HepG2 (cell line): ENCODE measurements at regions of chr5 and their contacts with region 1.

Region 1: GRCh38 chr5:132490486-132491367 is at the start of gene IRF1:
- DNase-seq: peak; percentile 91
- ATAC-seq: peak; percentile 91
- H3K4me3 ChIP-seq: peak within 1 kb of the TSS; percentile 65 to 85 (median 65)
- H3K27ac ChIP-seq: peak within 1 kb of the TSS; percentile 78
- H3K4me1 ChIP-seq: peaks cover 45% of the 10 kb centered on the region
- H3K27me3 ChIP-seq: no peaks in the 10 kb centered on the region
- CTCF ChIP-seq: peak; percentile 46; the same call in 1 of the 2 replicates
- EP300 ChIP-seq: peak in 1 of 2 experiments; percentile 27; a peak in 1 of 4 replicates
- POLR2A ChIP-seq: peak in 1 of 2 experiments; percentile 91; a peak in 2 of 4 replicates
- RAD21 ChIP-seq: no peak; the same call in none of the 2 replicates
- total RNA-seq, gene IRF1: 5.8 and 8.8 TPM in 2 replicates

Region 2: GRCh38 chr5:132293066-132293991 is 197.4 kb before region 1 on chr5:
- CTCF ChIA-PET with region 1: no interaction called
- POLR2A ChIA-PET with region 1: interaction called, 16 read pairs
- in situ Hi-C with region 1: loop called (anchors 10 kb)
- intact Hi-C with region 1: no loop called
- DNase-seq: peak; percentile 82
- ATAC-seq: peak; percentile 84
- H3K4me3 ChIP-seq: peak overlapping the region; percentile 51 to 79 (median 55)
- H3K27ac ChIP-seq: peak overlapping the region; percentile 92
- H3K4me1 ChIP-seq: peaks cover 27% of the 10 kb centered on the region
- H3K27me3 ChIP-seq: no peaks in the 10 kb centered on the region; a peak in 2 of 5 replicates
- CTCF ChIP-seq: peak; percentile 43
- EP300 ChIP-seq: no peak
- POLR2A ChIP-seq: peak; percentile 57 to 79
- RAD21 ChIP-seq: no peak; the same call in 1 of the 2 replicates

Region 3: GRCh38 chr5:132386644-132387286 is 104.0 kb before region 1 on chr5:
- CTCF ChIA-PET with region 1: no interaction called
- POLR2A ChIA-PET with region 1: interaction called, 10 read pairs
- in situ Hi-C with region 1: loop called (anchors 10 kb)
- intact Hi-C with region 1: no loop called
- DNase-seq: peak; percentile 56
- ATAC-seq: peak; percentile 93
- H3K4me3 ChIP-seq: no peak overlapping the region
- H3K27ac ChIP-seq: no peak overlapping the region
- H3K4me1 ChIP-seq: peaks cover 44% of the 10 kb centered on the region
- H3K27me3 ChIP-seq: no peaks in the 10 kb centered on the region
- CTCF ChIP-seq: peak; percentile 97
- EP300 ChIP-seq: no peak
- POLR2A ChIP-seq: no peak
- RAD21 ChIP-seq: peak; percentile 95

Region 4: DNA sequence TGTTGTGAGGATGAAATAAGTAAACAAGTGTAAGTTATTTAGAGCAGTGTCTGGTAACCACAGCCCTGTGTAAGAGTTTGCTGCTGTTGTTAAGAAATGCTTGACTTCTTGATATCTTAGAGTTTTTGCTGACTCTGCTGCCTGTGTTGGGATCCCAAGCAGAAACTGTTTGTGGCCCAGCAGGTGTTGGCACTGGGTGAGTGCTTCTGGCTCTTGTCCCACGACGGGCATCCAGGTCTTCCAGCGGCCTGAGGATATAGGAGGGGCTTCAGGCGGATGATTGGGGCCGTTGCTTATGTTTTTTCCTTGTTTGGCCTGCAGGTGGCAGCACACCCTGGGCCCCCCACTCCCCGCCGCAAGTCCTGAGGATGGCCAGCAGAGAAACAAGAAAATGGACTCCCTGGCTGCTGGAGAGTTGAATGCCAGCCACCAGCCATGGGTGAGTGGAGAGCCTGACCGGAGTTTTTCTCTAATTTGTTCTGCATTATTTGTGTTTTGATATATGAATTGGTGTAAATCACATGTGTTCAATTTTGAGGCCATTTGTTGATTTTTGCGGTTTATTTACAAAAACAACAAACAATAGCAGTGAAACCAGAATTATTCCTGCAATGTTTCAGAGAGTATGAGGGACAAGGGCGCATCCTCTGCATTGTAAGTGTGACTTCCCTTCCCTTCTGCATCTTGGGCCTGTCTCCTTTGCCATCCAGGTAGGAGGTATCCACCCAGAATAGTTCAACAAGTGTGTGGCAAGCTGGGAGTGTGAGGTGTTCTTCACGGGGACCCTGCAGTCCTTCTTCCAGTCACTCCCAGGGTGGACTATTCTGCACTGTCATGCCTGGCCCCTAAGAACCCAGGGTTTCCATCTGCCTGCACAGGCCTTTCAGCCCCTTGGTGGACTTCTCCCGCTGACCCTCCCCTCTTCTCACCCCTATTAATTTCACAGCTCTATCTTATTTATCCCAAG is 70.9 kb before region 1 on chr5:
- CTCF ChIA-PET with region 1: interaction called, 9 read pairs
- POLR2A ChIA-PET with region 1: interaction called, 86 read pairs
- in situ Hi-C with region 1: loop called (anchors 10 kb)
- intact Hi-C with region 1: loop called (anchors 2 kb)
- DNase-seq: peak; percentile 54
- ATAC-seq: peak; percentile 77
- H3K4me3 ChIP-seq: no peak overlapping the region
- H3K27ac ChIP-seq: no peak overlapping the region
- H3K4me1 ChIP-seq: peaks cover 52% of the 10 kb centered on the region
- H3K27me3 ChIP-seq: no peaks in the 10 kb centered on the region
- CTCF ChIP-seq: peak; percentile 89
- EP300 ChIP-seq: no peak
- POLR2A ChIP-seq: no peak
- RAD21 ChIP-seq: peak; percentile 89

Region 5: DNA sequence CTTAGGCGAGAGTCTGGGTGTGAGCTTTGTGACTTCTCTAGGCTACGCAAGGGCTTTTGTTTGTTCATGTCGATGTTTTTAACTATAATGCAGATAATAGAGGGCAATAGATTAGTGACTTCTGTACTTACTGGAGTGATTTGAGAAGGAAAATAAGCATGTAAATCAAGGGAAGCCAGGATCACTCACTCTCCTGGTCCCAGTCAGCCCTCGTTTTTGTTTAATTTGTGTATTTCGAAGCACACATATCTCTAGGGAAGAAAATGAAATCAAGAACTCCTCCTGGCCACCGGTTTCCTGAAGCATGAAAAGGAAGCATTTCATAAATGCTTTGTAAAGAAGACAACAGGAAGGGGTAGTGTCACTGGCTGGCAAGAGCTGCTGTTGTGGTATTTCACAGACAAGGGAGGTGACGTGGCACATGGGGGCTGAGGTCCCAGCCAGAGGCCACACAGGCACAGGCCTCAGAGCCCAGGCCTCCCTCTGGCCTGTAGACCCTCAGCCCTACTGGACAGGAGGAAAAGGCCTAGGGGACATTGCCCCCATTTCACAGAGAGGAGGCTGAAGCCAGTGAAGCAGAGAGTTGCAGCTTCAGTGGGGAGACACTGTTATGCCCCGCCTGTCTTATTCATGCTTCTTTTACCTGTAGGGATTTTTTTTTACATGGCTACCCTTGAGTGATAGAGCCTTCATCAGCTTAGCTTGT is 34.3 kb before region 1 on chr5:
- CTCF ChIA-PET with region 1: no interaction called
- POLR2A ChIA-PET with region 1: interaction called, 59 read pairs
- in situ Hi-C with region 1: no loop called
- intact Hi-C with region 1: loop called (anchors 5 kb)
- DNase-seq: no peak
- ATAC-seq: peak; percentile 44
- H3K4me3 ChIP-seq: peak overlapping the region in 2 of 3 experiments; percentile 9 to 39; a peak in 1 of 6 replicates
- H3K27ac ChIP-seq: peak overlapping the region; percentile 37
- H3K4me1 ChIP-seq: peaks cover 68% of the 10 kb centered on the region
- H3K27me3 ChIP-seq: no peaks in the 10 kb centered on the region; a peak in 1 of 5 replicates
- CTCF ChIP-seq: no peak
- EP300 ChIP-seq: no peak
- POLR2A ChIP-seq: no peak
- RAD21 ChIP-seq: no peak

Region 6: DNA sequence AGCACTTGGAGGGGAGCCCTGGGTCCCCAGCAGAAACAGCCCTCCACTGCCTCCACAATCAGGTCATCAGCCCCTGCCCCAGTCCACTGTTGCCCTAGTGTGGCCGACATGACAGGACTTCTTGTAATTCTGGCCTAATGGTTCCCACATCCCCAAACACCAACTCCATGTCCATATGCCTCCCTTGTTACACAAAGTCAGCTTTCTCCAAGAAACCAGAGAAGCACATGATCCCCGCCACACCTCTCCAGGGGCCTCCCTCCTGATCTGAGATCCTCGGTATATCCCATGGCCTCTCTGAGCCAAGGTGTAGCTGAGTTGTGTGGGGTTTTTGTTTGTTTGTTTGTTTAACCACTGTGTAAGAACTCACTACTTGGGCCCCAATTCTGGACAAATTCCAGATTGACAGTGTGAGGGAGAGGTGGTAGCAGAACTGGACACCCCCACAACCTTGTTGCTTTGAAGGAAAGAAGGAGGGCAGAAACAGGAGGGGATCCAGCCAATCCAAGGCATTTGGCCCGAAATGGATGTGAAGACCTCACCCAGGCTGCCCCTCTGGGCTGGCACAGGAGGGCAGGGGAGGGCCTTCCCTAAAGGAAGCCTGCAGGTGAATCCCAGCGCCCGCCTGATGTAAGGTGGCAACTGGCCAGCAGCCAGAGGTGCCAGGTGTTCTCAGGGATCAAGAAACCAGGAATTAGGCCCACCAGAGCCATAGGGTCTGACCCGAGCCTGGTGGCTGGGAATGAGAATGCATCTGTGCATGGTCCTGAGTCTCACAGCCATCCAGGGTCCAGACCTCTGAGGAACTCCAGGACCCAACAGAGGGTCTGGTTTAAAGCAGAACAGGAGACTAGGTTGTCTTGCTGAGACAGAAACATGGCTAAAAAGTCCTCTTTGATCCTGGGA is 13.6 kb before region 1 on chr5:
- CTCF ChIA-PET with region 1: no interaction called
- POLR2A ChIA-PET with region 1: interaction called, 99 read pairs
- in situ Hi-C with region 1: no loop called
- intact Hi-C with region 1: no loop called
- DNase-seq: no peak
- ATAC-seq: peak; percentile 66
- H3K4me3 ChIP-seq: no peak overlapping the region
- H3K27ac ChIP-seq: peak overlapping the region; percentile 12
- H3K4me1 ChIP-seq: peaks cover 61% of the 10 kb centered on the region
- H3K27me3 ChIP-seq: no peaks in the 10 kb centered on the region
- CTCF ChIP-seq: no peak
- EP300 ChIP-seq: no peak
- POLR2A ChIP-seq: no peak
- RAD21 ChIP-seq: peak; percentile 29; the same call in 1 of the 2 replicates

Region 7: GRCh38 chr5:132506094-132506692 is 15.5 kb after region 1 on chr5:
- CTCF ChIA-PET with region 1: no interaction called
- POLR2A ChIA-PET with region 1: interaction called, 39 read pairs
- in situ Hi-C with region 1: no loop called
- intact Hi-C with region 1: no loop called
- DNase-seq: peak; percentile 41
- ATAC-seq: peak; percentile 67
- H3K4me3 ChIP-seq: no peak overlapping the region
- H3K27ac ChIP-seq: no peak overlapping the region
- H3K4me1 ChIP-seq: peaks cover 55% of the 10 kb centered on the region
- H3K27me3 ChIP-seq: no peaks in the 10 kb centered on the region
- CTCF ChIP-seq: peak; percentile 69
- EP300 ChIP-seq: no peak
- POLR2A ChIP-seq: no peak
- RAD21 ChIP-seq: no peak